Activated CD4-positive, alpha-beta memory T cell treated with anti-CD3 and anti-CD28 coated beads for 36 hours (primary cell): ENCODE measurements at regions of chr11 and their contacts with region 1.

Region 1: GRCh38 chr11:67507864-67508485 is at the start of gene CDK2AP2:
- DNase-seq: peak; percentile 99
- H3K4me3 Mint-ChIP-seq: peak within 1 kb of the TSS; percentile 90
- H3K27ac Mint-ChIP-seq: peak within 1 kb of the TSS; percentile 98
- H3K4me1 Mint-ChIP-seq: peaks cover 30% of the 10 kb centered on the region
- H3K27me3 Mint-ChIP-seq: no peaks in the 10 kb centered on the region
- total RNA-seq, gene CDK2AP2: 82.7 to 84.7 TPM

Region 2: DNA sequence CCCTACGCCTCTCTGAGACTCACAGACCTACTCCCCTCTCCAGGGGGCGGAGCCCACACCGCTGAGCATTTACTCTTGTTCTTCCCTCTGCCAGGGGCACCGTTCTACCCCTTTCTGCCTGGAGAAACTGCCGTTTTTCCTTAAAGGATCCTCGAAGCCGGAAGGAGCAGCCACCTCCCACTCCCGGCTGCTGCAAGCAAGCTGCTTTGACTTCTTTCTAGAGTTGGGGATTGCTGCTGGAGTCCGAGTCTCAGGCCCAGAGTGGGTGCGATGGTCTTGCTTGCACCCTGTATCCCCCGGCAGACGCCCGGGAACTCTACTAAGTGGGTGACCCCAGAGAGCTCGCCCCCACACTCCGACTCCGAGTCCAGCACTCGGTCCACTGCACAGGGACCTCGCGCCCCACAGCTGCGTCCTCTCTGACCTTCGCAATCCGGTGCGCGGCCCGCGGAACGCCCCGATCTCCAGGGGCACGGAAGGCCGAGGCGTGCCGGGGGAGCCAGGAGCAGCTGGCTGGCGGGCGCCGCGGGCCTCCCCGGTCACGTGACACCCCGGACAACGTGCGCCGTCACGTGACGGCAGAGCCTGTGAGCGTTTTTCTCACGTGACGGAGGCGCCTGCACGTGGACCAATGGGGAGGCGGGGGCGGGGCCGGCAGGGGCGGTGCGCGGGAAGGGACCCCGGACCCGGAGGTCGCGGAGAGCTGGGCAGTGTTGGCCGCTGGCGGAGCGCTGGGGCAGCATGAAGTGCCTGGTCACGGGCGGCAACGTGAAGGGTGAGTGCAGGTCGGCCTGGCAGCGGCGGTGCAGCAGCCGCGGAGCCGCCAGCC is 116.5 kb before region 1 on chr11 and contains the start of gene RAD9A:
- CTCF ChIA-PET with region 1: no interaction called
- POLR2A ChIA-PET with region 1: no interaction called
- intact Hi-C with region 1: loop called (anchors 1 kb)
- DNase-seq: peak; percentile 95
- H3K4me3 Mint-ChIP-seq: peak within 1 kb of the TSS; percentile 92
- H3K27ac Mint-ChIP-seq: peak within 1 kb of the TSS; percentile 76
- H3K4me1 Mint-ChIP-seq: peaks cover 33% of the 10 kb centered on the region
- H3K27me3 Mint-ChIP-seq: no peaks in the 10 kb centered on the region
- total RNA-seq, gene RAD9A: 31.0 to 39.1 TPM

Region 3: GRCh38 chr11:67439321-67439883 is 68.6 kb before region 1 on chr11:
- CTCF ChIA-PET with region 1: interaction called, 5 read pairs
- POLR2A ChIA-PET with region 1: interaction called, 5 read pairs
- intact Hi-C with region 1: loop called (anchors 1 kb)
- DNase-seq: peak; percentile 72
- H3K4me3 Mint-ChIP-seq: peak overlapping the region; percentile 85
- H3K27ac Mint-ChIP-seq: peak overlapping the region; percentile 95
- H3K4me1 Mint-ChIP-seq: peaks cover 51% of the 10 kb centered on the region
- H3K27me3 Mint-ChIP-seq: no peaks in the 10 kb centered on the region

Region 4: GRCh38 chr11:67482825-67483798 is 24.9 kb before region 1 on chr11 and contains the start of gene AIP:
- CTCF ChIA-PET with region 1: interaction called, 10 read pairs
- POLR2A ChIA-PET with region 1: interaction called, 21 read pairs
- intact Hi-C with region 1: loop called (anchors 1 kb)
- DNase-seq: peak; percentile 99
- H3K4me3 Mint-ChIP-seq: peak within 1 kb of the TSS; percentile 90
- H3K27ac Mint-ChIP-seq: peak within 1 kb of the TSS; percentile 99
- H3K4me1 Mint-ChIP-seq: peaks cover 42% of the 10 kb centered on the region
- H3K27me3 Mint-ChIP-seq: no peaks in the 10 kb centered on the region
- total RNA-seq, gene AIP: 160 to 169 TPM

Region 5: GRCh38 chr11:67534070-67534679 is 26.2 kb after region 1 on chr11:
- CTCF ChIA-PET with region 1: no interaction called
- POLR2A ChIA-PET with region 1: no interaction called
- intact Hi-C with region 1: no loop called
- DNase-seq: no peak
- H3K4me3 Mint-ChIP-seq: no peak overlapping the region
- H3K27ac Mint-ChIP-seq: no peak overlapping the region
- H3K4me1 Mint-ChIP-seq: no peaks in the 10 kb centered on the region
- H3K27me3 Mint-ChIP-seq: no peaks in the 10 kb centered on the region

Region 6: DNA sequence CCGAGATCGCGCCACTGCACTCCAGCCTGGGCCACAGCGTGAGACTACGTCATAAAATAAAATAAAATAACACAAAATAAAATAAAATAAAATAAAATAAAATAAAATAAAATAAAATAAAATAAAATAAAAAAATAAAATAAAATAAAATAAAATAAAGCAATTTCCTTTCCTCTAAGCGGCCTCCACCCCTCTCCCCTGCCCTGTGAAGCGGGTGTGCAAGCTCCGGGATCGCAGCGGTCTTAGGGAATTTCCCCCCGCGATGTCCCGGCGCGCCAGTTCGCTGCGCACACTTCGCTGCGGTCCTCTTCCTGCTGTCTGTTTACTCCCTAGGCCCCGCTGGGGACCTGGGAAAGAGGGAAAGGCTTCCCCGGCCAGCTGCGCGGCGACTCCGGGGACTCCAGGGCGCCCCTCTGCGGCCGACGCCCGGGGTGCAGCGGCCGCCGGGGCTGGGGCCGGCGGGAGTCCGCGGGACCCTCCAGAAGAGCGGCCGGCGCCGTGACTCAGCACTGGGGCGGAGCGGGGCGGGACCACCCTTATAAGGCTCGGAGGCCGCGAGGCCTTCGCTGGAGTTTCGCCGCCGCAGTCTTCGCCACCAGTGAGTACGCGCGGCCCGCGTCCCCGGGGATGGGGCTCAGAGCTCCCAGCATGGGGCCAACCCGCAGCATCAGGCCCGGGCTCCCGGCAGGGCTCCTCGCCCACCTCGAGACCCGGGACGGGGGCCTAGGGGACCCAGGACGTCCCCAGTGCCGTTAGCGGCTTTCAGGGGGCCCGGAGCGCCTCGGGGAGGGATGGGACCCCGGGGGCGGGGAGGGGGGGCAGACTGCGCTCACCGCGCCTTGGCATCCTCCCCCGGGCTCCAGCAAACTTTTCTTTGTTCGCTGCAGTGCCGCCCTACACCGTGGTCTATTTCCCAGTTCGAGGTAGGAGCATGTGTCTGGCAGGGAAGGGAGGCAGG is 75.6 kb after region 1 on chr11 and contains the start of gene GSTP1:
- CTCF ChIA-PET with region 1: no interaction called
- POLR2A ChIA-PET with region 1: no interaction called
- intact Hi-C with region 1: loop called (anchors 5 kb)
- DNase-seq: peak; percentile 85
- H3K4me3 Mint-ChIP-seq: peak within 1 kb of the TSS; percentile 95
- H3K27ac Mint-ChIP-seq: peak within 1 kb of the TSS; percentile 91
- H3K4me1 Mint-ChIP-seq: peaks cover 52% of the 10 kb centered on the region
- H3K27me3 Mint-ChIP-seq: peaks cover under 1% of the 10 kb centered on the region
- total RNA-seq, gene GSTP1: 361 to 362 TPM